Common myeloid progenitor, CD34-positive (primary cell): ENCODE measurements at regions of chr5 and their contacts with region 1.

Region 1: DNA sequence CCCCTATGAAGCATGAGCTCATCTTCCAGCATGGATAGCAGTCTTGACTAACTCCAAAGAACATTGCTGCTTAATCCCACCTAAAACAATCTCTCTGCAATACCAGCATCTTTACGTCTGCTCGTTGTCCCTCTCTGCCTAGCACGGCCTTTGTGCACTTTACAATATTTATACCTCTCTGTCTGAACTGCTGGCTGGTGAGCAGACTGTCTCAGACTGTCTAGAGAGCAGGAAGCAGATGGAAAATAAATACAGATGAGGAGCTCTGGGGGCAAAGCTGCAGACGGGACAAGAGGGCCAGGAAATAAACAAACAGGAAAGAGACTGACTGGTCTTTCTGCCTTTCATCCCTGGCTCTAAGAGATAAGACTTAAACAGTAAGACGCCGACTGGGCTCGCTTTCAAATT is 224.8 kb downstream of the ENC1 start:
- DNase-seq: peak; percentile 70 to 97 (median 92)
- H3K4me3 ChIP-seq: peak overlapping the region in 2 of 7 experiments; percentile 19 to 33
- H3K27ac ChIP-seq: no peak overlapping the region
- H3K4me1 ChIP-seq: peaks cover 5 to 24% (median 15%) of the 10 kb centered on the region in 4 experiments
- H3K27me3 ChIP-seq: no peaks in the 10 kb centered on the region

Region 2: GRCh38 chr5:73945498-73945897 is 470.2 kb before region 1 on chr5:
- CTCF ChIA-PET with region 1: no interaction called
- POLR2A ChIA-PET with region 1: no interaction called
- DNase-seq: no peak
- H3K4me3 ChIP-seq: no peak overlapping the region
- H3K27ac ChIP-seq: no peak overlapping the region
- H3K4me1 ChIP-seq: no peaks in the 10 kb centered on the region
- H3K27me3 ChIP-seq: peaks cover 0 to 3% (median 0%) of the 10 kb centered on the region in 5 experiments

Region 3: GRCh38 chr5:74433255-74433895 is 17.7 kb after region 1 on chr5:
- CTCF ChIA-PET with region 1: interaction called, 12 read pairs
- POLR2A ChIA-PET with region 1: interaction called, 22 read pairs
- DNase-seq: peak; percentile 46 to 90 (median 84)
- H3K4me3 ChIP-seq: peak overlapping the region in 5 of 7 experiments; percentile 1 to 52 (median 10)
- H3K27ac ChIP-seq: no peak overlapping the region
- H3K4me1 ChIP-seq: peaks cover 25 to 50% (median 32%) of the 10 kb centered on the region in 4 experiments
- H3K27me3 ChIP-seq: no peaks in the 10 kb centered on the region

Region 4: GRCh38 chr5:75243100-75243499 is 827.4 kb after region 1 on chr5:
- CTCF ChIA-PET with region 1: no interaction called
- POLR2A ChIA-PET with region 1: no interaction called
- DNase-seq: no peak
- H3K4me3 ChIP-seq: no peak overlapping the region
- H3K27ac ChIP-seq: no peak overlapping the region
- H3K4me1 ChIP-seq: no peaks in the 10 kb centered on the region
- H3K27me3 ChIP-seq: no peaks in the 10 kb centered on the region